Heart left ventricle (tissue), 16 donors: ENCODE measurements at regions of chr7 and their contacts with region 1.

Region 1: DNA sequence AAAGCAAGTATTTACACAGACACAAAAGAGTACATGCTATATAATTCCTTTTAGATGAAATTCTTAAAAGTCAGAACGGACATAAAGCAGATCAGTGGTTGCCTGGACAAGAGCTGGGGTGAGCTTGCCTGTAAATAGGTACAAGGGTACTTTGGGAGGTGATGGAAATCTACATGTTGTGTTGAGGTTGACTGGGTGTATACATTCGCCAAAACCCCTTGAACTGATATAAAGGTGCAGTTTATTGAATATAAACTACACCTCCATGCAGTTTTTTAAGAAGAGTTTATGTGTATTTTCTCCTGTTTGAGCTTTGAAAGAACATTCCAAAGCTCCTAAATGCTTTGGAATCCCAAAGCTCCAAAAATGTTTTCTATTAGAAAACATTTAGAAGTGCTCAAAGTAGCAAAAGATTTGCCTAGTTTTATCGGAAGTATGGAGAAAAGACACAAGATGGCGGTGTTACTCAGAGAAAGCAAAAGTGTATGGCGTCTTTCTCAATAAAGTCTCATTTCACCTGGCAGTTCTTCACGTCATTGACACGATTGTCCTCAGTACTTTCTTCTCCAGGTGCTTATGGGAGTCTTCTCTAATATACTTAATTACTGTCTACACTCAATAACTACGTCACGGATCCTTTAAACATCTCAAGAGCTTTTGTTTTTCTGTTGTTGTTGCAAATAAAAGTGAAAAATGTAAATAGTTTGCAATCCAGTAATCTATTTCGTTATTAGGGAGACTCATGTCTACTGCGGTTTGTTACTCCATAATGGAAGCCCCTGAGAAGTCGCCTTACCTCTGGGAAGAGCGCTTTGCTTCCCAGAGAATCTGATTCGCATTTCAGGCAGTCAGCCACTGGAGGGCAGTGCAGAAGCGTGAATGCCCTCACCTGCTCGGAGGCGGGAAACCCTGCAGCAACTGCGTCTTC is 14.7 kb upstream of the SEC61G start:
- DNase-seq: peak; percentile 77 to 84 (median 80)
- ATAC-seq: peak; percentile 82 to 97 (median 93)
- H3K4me3 ChIP-seq: peak overlapping the region in 10 of 12 donors; percentile 6 to 60 (median 39)
- H3K27ac ChIP-seq: no peak overlapping the region
- H3K4me1 ChIP-seq: peaks cover 0 to 5% (median 0%) of the 10 kb centered on the region in 12 donors
- H3K27me3 ChIP-seq: peaks cover 0 to 19% (median 0%) of the 10 kb centered on the region in 9 donors
- CTCF ChIP-seq: peak; percentile 61 to 89 (median 82)
- POLR2A ChIP-seq: no peak

Region 2: DNA sequence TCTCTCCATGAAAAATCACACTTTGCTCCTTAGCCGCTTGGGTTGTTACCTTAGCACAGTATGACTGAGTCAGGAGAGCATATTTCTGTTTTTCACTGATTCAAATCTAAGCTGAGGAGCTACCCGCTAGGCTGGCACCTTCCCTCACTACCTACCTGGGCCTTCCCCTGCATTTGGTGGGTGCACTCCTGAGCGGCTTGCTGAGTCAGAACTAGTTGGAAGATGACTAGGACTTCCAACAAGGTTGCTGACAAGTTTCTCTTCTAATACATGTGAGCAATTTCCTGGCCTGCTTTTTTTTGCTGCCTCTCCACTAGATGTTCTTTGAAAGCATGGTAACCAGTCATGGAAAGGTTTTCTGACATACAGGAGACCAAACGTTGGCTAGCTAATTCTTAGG is 29.1 kb after region 1 on chr7:
- intact Hi-C with region 1: loop called in 1 of 10 experiments (anchors 2 kb)
- DNase-seq: no peak
- ATAC-seq: no peak
- H3K4me3 ChIP-seq: no peak overlapping the region
- H3K27ac ChIP-seq: no peak overlapping the region
- H3K4me1 ChIP-seq: peaks cover 0 to 6% (median 0%) of the 10 kb centered on the region in 12 donors
- H3K27me3 ChIP-seq: no peaks in the 10 kb centered on the region
- CTCF ChIP-seq: no peak
- POLR2A ChIP-seq: no peak

Region 3: DNA sequence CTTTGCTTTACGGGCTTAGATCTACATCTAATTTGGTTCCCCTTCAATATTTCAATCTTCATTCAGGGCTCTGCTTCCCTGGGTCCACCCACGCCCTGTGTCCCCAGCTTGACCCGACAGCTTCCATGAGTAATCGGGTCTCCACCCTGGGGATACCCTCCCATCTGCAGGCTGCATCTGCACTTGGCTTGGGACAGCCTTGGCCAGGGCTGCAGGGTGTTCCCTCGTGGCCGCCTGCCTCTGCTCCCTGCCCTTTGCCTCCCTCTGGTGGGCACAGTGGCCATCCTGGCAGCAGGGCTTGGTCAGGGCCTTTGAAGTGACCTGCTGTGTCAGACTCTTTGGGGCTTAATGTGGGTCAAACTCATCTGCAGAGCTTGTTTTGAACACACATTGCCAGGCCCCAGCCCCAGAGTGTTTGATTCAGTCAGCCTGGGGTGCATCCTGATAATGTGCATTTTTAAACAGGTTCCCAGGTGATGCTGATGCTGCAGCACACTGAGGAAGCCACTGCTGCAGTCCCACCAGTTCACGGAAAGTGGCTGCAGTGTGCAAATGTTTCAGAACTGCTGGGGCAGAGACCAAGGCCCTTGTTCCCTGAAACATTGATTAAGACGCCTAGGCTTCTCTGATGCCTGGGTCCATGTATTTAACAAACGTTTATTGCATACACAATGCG is 65.9 kb after region 1 on chr7:
- intact Hi-C with region 1: loop called in 2 of 10 experiments (anchors 5 kb)
- DNase-seq: peak; percentile 78 to 88 (median 86)
- ATAC-seq: peak; percentile 83 to 95 (median 92)
- H3K4me3 ChIP-seq: no peak overlapping the region
- H3K27ac ChIP-seq: peak overlapping the region in 1 of 12 donors; percentile 26
- H3K4me1 ChIP-seq: peaks cover 0 to 52% (median 23%) of the 10 kb centered on the region in 12 donors
- H3K27me3 ChIP-seq: no peaks in the 10 kb centered on the region
- CTCF ChIP-seq: peak; percentile 54 to 74 (median 68)
- POLR2A ChIP-seq: no peak

Region 4: DNA sequence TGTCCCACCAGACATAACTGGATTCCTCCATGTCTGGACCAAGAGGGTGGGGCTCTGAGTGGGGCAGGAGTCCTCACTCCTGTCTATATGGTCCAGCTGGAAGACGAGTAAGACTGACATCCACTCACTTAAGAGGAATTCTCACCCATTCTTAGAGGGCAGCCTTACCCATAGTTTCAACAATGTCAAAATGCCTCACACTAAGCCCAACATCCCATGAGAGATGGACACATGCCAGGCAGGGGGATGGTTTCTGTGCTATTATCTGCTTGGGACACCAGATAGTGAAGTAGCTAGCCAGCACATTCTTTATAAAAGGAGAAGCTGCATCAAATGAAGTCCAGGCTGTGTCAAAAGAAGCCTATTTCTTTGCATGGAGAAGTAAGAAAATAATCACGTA is 586.8 kb after region 1 on chr7:
- intact Hi-C with region 1: loop called in 1 of 10 experiments (anchors 5 kb)
- DNase-seq: no peak
- ATAC-seq: no peak
- H3K4me3 ChIP-seq: no peak overlapping the region
- H3K27ac ChIP-seq: no peak overlapping the region
- H3K4me1 ChIP-seq: peaks cover 0 to 9% (median 4%) of the 10 kb centered on the region in 12 donors
- H3K27me3 ChIP-seq: peaks cover 0 to 7% (median 0%) of the 10 kb centered on the region in 9 donors
- CTCF ChIP-seq: no peak
- POLR2A ChIP-seq: no peak

Region 5: DNA sequence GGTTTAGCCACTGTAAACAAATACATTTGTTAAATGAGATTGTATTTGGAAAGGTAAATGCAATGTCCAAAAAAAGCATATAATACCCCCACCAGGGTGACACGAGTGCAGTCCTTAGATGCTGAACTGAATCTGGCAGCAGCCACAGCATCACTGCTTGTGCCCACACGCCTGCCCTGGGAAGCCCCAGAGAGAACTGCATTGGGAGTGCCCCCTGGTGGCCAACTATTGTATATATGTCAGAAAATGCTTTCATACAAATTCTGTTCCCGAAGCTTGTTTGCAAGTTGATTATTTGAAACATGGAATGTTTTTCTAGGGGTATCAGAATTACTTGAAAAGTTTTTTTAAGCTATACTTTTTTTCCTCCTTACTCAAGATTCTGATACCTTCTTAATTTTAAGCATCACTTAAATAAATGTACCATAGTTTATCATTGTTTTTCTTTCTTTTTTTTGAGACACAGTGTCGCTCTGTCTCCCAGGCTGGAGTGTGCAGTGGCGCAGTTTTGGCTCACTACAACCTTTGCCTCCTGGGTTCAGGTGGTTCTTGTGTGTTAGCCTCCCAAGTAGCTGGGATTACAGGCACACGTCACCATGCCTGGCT is 641.5 kb after region 1 on chr7:
- intact Hi-C with region 1: loop called in 3 of 10 experiments (anchors 5 to 10 kb)
- DNase-seq: peak; percentile 72 to 87 (median 77)
- ATAC-seq: peak in 3 of 4 donors; percentile 77 to 85 (median 82)
- H3K4me3 ChIP-seq: no peak overlapping the region
- H3K27ac ChIP-seq: no peak overlapping the region
- H3K4me1 ChIP-seq: no peaks in the 10 kb centered on the region
- H3K27me3 ChIP-seq: no peaks in the 10 kb centered on the region
- CTCF ChIP-seq: peak; percentile 73 to 89 (median 84)
- POLR2A ChIP-seq: no peak